ENCODE measurements at regions of chr1 and their contacts with region 1.

Region 1: DNA sequence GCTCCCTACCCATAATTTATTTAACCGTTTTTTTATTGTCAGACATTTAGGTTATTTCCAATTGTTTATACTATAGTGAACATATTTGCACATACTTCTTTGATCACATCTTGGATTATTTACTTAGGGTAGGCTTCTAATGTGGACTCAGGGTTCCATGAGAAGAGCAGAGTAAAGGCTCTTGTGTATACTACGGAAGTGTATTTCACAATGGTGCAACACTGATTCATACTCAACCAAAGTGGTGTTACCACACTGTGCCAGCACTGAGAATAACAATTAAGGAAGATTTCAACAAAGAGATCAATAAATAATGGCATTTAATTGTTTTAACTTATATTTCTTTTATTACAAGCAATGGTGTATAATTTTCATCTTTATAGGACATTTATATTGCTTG is 251.2 kb downstream of the ZNF326 start:
- DNase-seq: no peak
- ATAC-seq: no peak
- H3K4me3 ChIP-seq: no peak overlapping the region
- H3K27ac ChIP-seq: no peak overlapping the region
- H3K4me1 ChIP-seq: no peaks in the 10 kb centered on the region
- H3K27me3 ChIP-seq: no peaks in the 10 kb centered on the region
- CTCF ChIP-seq: no peak

Region 2: GRCh38 chr1:89945852-89946476 is 300.1 kb before region 1 on chr1:
- CTCF ChIA-PET with region 1: no interaction called
- POLR2A ChIA-PET with region 1: no interaction called
- in situ Hi-C with region 1: no loop called
- intact Hi-C with region 1: no loop called
- DNase-seq: no peak
- ATAC-seq: no peak
- H3K4me3 ChIP-seq: no peak overlapping the region
- H3K27ac ChIP-seq: no peak overlapping the region
- H3K4me1 ChIP-seq: no peaks in the 10 kb centered on the region
- H3K27me3 ChIP-seq: no peaks in the 10 kb centered on the region
- CTCF ChIP-seq: no peak

Region 3: DNA sequence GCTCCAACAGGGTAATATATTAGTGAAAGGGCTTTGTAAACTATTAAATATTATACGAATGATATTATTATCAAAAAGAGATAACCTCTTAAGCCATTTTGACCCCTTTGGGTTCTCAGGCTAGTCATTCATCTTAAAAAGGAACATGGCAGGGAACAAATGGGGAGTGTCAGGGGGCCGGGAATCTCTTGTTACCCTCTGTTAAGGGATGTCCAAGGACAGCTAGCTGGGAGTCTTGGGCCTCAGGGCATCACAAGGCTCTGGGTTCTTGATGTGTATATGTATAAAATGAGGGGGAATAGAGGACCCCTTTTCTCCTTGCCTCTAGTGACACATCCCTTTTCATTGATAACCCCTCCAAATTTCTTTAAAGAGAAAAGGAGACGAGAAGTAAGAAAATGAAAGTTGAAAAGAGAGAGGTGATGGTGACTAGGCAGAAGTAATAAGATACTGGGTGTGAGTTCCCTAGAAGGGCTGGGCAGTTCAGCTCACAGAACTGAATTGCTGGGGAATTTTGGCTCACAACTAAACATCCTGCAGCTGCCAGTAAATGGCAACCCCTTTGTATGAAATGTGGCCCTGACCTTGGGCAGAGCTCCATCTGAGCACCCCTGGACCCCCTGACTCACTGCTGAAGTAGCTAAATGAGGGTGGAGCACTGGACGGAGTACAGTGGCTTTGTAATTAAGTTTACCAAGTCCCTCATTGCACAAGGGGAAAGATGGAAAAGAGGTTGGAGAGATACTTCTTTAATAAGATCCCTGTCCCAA is 271.2 kb before region 1 on chr1:
- CTCF ChIA-PET with region 1: no interaction called
- POLR2A ChIA-PET with region 1: interaction called, 11 read pairs
- in situ Hi-C with region 1: no loop called
- intact Hi-C with region 1: no loop called
- DNase-seq: no peak
- ATAC-seq: no peak
- H3K4me3 ChIP-seq: no peak overlapping the region
- H3K27ac ChIP-seq: no peak overlapping the region
- H3K4me1 ChIP-seq: no peaks in the 10 kb centered on the region
- H3K27me3 ChIP-seq: no peaks in the 10 kb centered on the region
- CTCF ChIP-seq: no peak

Region 4: DNA sequence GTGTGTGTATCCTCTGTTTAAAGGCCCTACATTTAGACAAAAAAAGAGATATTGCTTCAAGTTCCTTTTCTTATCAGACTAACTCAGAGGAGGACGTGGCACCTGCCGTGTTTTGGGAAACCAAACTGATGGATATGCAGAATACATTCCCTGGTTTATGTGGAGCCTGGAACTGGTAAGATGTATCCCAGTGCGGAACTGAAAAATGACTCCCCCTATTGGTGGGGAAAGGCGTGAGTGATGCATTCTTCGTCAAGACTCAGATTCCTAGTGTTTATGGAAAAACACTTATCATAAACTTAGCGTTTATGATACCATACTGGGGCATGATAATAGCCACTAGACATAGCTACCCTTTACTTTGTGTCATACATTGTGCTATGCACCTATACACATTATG is 97.0 kb before region 1 on chr1:
- CTCF ChIA-PET with region 1: no interaction called
- POLR2A ChIA-PET with region 1: no interaction called
- in situ Hi-C with region 1: no loop called
- intact Hi-C with region 1: no loop called
- DNase-seq: no peak
- ATAC-seq: no peak
- H3K4me3 ChIP-seq: no peak overlapping the region
- H3K27ac ChIP-seq: no peak overlapping the region
- H3K4me1 ChIP-seq: no peaks in the 10 kb centered on the region
- H3K27me3 ChIP-seq: no peaks in the 10 kb centered on the region
- CTCF ChIP-seq: peak; percentile 32; the same call in 1 of the 2 replicates

Region 5: DNA sequence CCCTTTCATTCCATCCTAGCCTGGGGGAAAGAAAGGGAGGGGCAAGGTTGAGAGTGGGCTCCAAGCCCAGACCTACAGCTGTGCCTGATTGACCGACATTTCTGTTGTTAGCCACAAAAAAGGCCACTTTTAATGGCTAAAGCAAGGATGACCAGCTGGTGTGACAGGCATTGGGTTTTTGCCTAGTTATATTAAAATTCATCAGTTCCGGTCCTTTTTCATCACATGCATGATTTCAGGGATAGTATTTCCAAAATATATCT is 58.8 kb before region 1 on chr1:
- CTCF ChIA-PET with region 1: interaction called, 14 read pairs
- POLR2A ChIA-PET with region 1: no interaction called
- in situ Hi-C with region 1: no loop called
- intact Hi-C with region 1: no loop called
- DNase-seq: no peak
- ATAC-seq: no peak
- H3K4me3 ChIP-seq: no peak overlapping the region
- H3K27ac ChIP-seq: no peak overlapping the region
- H3K4me1 ChIP-seq: no peaks in the 10 kb centered on the region
- H3K27me3 ChIP-seq: peaks cover 3% of the 10 kb centered on the region
- CTCF ChIP-seq: no peak

Region 6: DNA sequence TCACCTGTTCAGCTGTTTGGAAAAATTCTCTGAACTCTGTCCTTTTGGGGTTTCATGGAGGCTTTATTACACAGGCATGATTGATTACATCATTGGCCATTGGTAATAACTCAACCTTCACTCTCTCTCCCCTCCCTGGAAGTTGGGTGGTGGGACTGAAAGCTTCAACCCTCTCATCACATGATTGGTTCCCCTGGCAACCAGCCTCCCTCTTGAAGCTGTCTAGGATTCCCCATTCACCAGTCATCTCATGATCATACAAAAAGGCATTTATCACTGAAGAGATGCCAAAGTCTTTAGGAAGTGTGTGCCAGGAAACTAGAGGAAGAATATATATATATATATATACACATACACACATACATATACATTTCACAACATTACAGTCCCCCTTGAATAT is 22.7 kb before region 1 on chr1:
- CTCF ChIA-PET with region 1: interaction called, 10 read pairs
- POLR2A ChIA-PET with region 1: no interaction called
- in situ Hi-C with region 1: no loop called
- intact Hi-C with region 1: no loop called
- DNase-seq: no peak
- ATAC-seq: no peak
- H3K4me3 ChIP-seq: no peak overlapping the region
- H3K27ac ChIP-seq: no peak overlapping the region
- H3K4me1 ChIP-seq: no peaks in the 10 kb centered on the region
- H3K27me3 ChIP-seq: peaks cover 9% of the 10 kb centered on the region
- CTCF ChIP-seq: no peak

Region 7: GRCh38 chr1:90291431-90292216 is 45.6 kb after region 1 on chr1:
- CTCF ChIA-PET with region 1: no interaction called
- POLR2A ChIA-PET with region 1: no interaction called
- in situ Hi-C with region 1: no loop called
- intact Hi-C with region 1: no loop called
- DNase-seq: no peak
- ATAC-seq: no peak
- H3K4me3 ChIP-seq: no peak overlapping the region
- H3K27ac ChIP-seq: no peak overlapping the region
- H3K4me1 ChIP-seq: no peaks in the 10 kb centered on the region
- H3K27me3 ChIP-seq: no peaks in the 10 kb centered on the region
- CTCF ChIP-seq: no peak

Region 8: DNA sequence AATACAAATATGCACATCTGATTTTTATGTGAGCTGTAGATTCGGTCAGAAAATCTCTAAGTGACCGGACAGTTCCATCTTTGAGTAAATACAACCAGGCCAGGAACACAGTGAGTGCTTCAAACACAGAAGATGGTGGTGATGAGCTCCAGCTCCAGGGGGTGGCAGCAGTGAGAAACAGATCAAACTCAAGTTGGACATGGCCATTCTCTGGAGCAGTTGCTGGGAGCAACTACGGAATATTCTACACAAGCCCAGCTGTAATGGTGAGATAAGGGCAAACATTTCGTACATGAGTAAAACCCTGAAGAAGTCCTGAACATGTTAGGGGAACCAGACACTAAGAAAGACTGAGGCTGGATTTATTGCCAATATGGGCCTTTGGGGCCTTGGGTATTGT is 370.3 kb after region 1 on chr1:
- CTCF ChIA-PET with region 1: no interaction called
- POLR2A ChIA-PET with region 1: no interaction called
- in situ Hi-C with region 1: no loop called
- intact Hi-C with region 1: no loop called
- DNase-seq: no peak
- ATAC-seq: no peak
- H3K4me3 ChIP-seq: no peak overlapping the region
- H3K27ac ChIP-seq: no peak overlapping the region
- H3K4me1 ChIP-seq: no peaks in the 10 kb centered on the region
- H3K27me3 ChIP-seq: no peaks in the 10 kb centered on the region
- CTCF ChIP-seq: peak; percentile 65